Naive thymus-derived CD4-positive, alpha-beta T cell (primary cell): ENCODE measurements at regions of chr4 and their contacts with region 1.

Region 1: GRCh38 chr4:121800961-121801714 is at the start of gene EXOSC9:
- DNase-seq: peak; percentile 88 to 98 (median 95)
- ATAC-seq: peak; percentile 92
- H3K4me3 ChIP-seq: peak within 1 kb of the TSS; percentile 92
- H3K4me3 Mint-ChIP-seq: peak within 1 kb of the TSS; percentile 89 to 99 (median 95)
- H3K27ac ChIP-seq: peak within 1 kb of the TSS; percentile 93
- H3K27ac Mint-ChIP-seq: peak within 1 kb of the TSS; percentile 97 to 100 (median 99)
- H3K4me1 ChIP-seq: peaks cover 16 to 20% of the 10 kb centered on the region in 2 donors
- H3K4me1 Mint-ChIP-seq: peaks cover 26 to 55% (median 50%) of the 10 kb centered on the region in 7 donors
- H3K27me3 ChIP-seq: no peaks in the 10 kb centered on the region
- H3K27me3 Mint-ChIP-seq: peaks cover 0 to 2% (median 0%) of the 10 kb centered on the region in 5 donors
- total RNA-seq, gene EXOSC9: 37.5 to 55.0 (median 44.2) TPM

Region 2: DNA sequence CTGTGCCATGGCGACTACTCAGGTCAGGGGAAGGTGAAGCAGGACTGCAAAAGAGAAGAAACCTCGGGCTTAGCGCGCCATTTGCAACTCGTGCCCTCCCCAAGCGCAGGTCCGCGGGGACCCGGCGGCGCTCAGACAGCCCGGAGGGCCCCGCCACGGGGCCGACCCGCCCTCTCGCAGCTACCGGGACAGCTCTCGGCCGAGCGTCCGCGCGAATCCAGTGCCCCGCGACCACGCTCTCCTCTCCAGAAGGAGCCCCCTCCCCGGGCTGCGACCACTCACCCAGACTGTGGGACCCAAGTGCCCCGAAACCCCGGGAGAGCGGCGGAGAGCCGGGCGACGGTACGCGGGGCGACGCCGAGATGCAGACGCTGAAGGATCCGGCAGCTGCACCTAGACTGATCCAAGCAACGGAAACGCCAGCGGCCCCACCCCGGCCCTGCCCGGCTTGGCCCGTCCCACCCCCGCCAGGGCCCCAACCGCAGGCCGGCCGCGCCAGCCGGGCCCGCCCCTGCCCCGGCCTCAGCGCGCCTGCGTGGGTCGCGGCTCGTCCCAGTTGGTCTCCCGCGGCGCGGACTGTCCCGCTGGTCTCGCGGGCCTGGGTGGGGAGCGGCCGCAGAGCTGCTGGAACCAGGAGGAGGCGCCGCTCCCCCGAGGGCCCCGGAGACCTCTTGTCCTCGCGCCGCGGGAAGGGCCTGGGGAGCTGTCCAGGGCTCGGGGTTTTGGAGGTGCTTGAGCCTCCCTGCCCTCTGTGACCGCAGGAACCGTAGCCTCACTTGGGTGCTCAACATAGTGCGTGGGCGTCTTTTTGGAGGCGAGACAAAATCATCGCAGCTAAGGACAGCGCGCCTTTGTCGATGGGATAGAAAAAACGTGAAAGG is 104.3 kb before region 1 on chr4 and contains the start of gene ANXA5:
- CTCF ChIA-PET with region 1: no interaction called
- POLR2A ChIA-PET with region 1: interaction called, 6 read pairs
- intact Hi-C with region 1: loop called (anchors 1 kb)
- DNase-seq: peak; percentile 8 to 85 (median 41)
- ATAC-seq: peak; percentile 92
- H3K4me3 ChIP-seq: peak within 1 kb of the TSS; percentile 87
- H3K4me3 Mint-ChIP-seq: peak within 1 kb of the TSS; percentile 94 to 99 (median 97)
- H3K27ac ChIP-seq: peak within 1 kb of the TSS; percentile 39
- H3K27ac Mint-ChIP-seq: peak within 1 kb of the TSS; percentile 67 to 99 (median 87)
- H3K4me1 ChIP-seq: peaks cover 4 to 13% of the 10 kb centered on the region in 2 donors
- H3K4me1 Mint-ChIP-seq: peaks cover 12 to 43% (median 19%) of the 10 kb centered on the region in 7 donors
- H3K27me3 ChIP-seq: no peaks in the 10 kb centered on the region
- H3K27me3 Mint-ChIP-seq: peaks cover 0 to 43% (median 28%) of the 10 kb centered on the region in 5 donors
- total RNA-seq, gene ANXA5: 25.5 to 180 (median 49.5) TPM

Region 3: GRCh38 chr4:121823505-121824170 is 22.5 kb after region 1 on chr4 and contains the start of gene CCNA2:
- CTCF ChIA-PET with region 1: interaction called, 6 read pairs
- POLR2A ChIA-PET with region 1: interaction called, 41 read pairs
- intact Hi-C with region 1: loop called (anchors 1 kb)
- DNase-seq: peak; percentile 86 to 95 (median 93)
- ATAC-seq: peak; percentile 99
- H3K4me3 ChIP-seq: peak within 1 kb of the TSS; percentile 85
- H3K4me3 Mint-ChIP-seq: peak within 1 kb of the TSS; percentile 85 to 100 (median 92)
- H3K27ac ChIP-seq: peak within 1 kb of the TSS; percentile 60
- H3K27ac Mint-ChIP-seq: peak within 1 kb of the TSS; percentile 72 to 97 (median 93)
- H3K4me1 ChIP-seq: peaks cover 0 to 9% of the 10 kb centered on the region in 2 donors
- H3K4me1 Mint-ChIP-seq: peaks cover 4 to 44% (median 12%) of the 10 kb centered on the region in 7 donors
- H3K27me3 ChIP-seq: no peaks in the 10 kb centered on the region
- H3K27me3 Mint-ChIP-seq: peaks cover 0 to 3% (median 0%) of the 10 kb centered on the region in 5 donors
- total RNA-seq, gene CCNA2: 0.24 to 63.7 (median 1.2) TPM

Region 4: DNA sequence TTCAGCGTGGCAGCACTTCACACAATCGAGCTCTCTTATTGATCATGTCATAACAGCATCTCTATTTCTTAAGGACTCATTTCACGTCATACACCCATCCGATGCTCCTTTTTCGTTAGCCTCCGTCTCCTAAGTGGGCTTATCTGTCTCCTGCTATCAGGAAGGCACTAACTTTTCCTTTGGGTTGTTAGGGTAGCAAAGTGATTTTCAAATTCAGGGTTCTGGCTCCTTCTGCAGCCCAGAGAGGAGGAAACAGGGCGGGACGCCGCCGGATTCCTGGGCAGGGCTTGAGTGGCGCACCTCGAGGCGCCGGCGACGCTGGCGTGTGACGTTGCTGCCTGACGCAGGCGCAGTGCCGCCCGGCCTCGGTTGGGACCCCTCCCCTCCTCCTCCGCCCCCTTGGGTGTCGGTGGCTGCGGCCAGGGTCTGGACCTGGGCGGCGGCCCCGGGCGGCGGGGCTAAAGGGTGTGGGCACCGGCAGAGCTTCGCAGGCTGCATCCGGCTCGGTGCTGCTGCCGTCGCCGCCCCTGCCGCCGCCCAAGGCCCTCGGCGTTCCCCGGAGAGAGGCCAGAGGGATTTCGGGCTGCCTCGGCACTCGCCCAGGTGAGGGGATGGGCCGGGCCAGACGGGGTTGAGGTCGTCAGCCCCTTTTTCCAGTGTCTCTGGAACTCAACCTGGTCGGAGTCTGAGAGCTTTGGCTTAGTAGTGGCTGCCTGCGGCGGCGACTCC is 351.0 kb after region 1 on chr4 and contains the start of gene BLTP1:
- CTCF ChIA-PET with region 1: no interaction called
- POLR2A ChIA-PET with region 1: interaction called, 6 read pairs
- intact Hi-C with region 1: loop called in 1 of 2 experiments (anchors 1 kb)
- DNase-seq: peak; percentile 81 to 92 (median 87)
- ATAC-seq: peak; percentile 95
- H3K4me3 ChIP-seq: peak within 1 kb of the TSS; percentile 96
- H3K4me3 Mint-ChIP-seq: peak within 1 kb of the TSS; percentile 79 to 98 (median 98)
- H3K27ac ChIP-seq: peak within 1 kb of the TSS; percentile 85
- H3K27ac Mint-ChIP-seq: peak within 1 kb of the TSS; percentile 90 to 100 (median 97)
- H3K4me1 ChIP-seq: peaks cover 22 to 28% of the 10 kb centered on the region in 2 donors
- H3K4me1 Mint-ChIP-seq: peaks cover 41 to 84% (median 72%) of the 10 kb centered on the region in 7 donors
- H3K27me3 ChIP-seq: no peaks in the 10 kb centered on the region
- H3K27me3 Mint-ChIP-seq: no peaks in the 10 kb centered on the region
- total RNA-seq, gene BLTP1: 45.9 to 86.6 (median 72.8) TPM